CD8-positive, alpha-beta memory T cell (primary cell): ENCODE measurements at regions of chr1 and their contacts with region 1.

Region 1: DNA sequence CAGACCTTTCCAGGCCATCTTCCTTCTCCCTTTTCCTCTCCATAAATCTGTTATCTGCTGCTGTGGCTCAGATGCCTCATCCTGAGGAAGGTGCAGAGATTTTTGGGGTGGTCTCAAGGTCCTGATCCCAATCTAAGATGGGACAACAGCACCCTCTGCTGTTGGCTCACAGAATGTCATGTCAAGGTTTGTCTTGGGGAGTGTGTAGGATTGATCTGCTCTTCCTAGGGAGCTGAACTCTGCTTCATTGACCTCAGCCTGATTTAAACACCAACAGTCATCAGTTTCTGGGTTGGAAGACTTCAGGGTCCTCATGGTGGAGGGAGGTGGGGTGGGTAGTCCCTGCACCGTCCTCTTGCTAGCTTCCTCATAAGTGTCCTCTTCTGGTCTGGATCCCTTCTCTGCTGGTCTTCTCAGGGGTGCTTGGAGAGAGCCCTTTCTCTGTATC is 62.8 kb upstream of the LAX1 start:
- DNase-seq: peak; percentile 34 to 69 (median 53)
- H3K4me3 ChIP-seq: no peak overlapping the region
- H3K4me3 Mint-ChIP-seq: no peak overlapping the region
- H3K27ac ChIP-seq: no peak overlapping the region
- H3K27ac Mint-ChIP-seq: peak overlapping the region; percentile 19 to 97 (median 90)
- H3K4me1 ChIP-seq: no peaks in the 10 kb centered on the region
- H3K4me1 Mint-ChIP-seq: peaks cover 10 to 20% (median 13%) of the 10 kb centered on the region in 3 donors
- H3K27me3 ChIP-seq: no peaks in the 10 kb centered on the region
- H3K27me3 Mint-ChIP-seq: no peaks in the 10 kb centered on the region

Region 2: DNA sequence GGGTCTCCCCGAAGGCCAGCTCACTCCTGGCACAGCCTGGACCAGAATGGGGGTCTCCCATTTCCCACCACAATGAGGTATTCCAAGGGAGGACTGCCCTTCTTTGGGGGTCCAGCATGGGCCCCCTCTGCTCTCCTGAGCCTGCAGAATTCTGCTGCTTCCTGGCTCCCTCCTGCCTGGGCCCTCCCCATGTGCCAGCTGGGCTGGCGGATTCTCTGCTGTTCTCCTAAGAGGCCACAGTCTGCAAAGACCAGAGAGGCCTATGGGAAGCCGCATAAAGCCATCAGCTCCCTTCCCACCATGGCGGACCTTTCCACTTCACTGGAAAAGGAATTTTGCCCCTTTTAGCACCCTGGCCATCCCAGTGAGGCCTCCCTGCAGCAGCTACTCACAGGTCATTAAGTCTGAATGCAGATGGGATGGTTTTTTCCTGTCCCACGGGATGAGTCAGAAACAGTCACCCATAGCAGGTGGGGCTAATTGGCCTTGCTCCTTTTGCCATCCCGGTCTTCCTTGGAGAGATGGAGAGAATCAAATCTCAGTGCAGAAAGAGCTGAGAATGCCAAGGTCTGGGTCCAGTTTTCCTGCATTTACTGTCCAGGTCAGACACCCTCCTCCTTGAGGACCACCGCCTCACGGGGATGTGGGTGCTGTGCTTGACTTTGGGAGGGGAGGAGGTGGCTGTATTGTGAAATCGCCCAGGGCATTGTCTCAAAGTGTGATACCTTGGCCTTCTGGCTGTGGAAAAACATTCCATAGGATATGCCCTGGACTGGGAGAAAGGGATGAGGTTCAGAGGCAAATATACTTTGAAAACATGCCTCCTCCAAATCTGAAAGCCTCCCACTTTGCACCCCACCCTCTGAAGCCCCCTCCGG is 549.8 kb before region 1 on chr1:
- CTCF ChIA-PET with region 1: no interaction called
- POLR2A ChIA-PET with region 1: no interaction called
- DNase-seq: no peak
- H3K4me3 ChIP-seq: no peak overlapping the region
- H3K4me3 Mint-ChIP-seq: no peak overlapping the region
- H3K27ac ChIP-seq: no peak overlapping the region
- H3K27ac Mint-ChIP-seq: peak overlapping the region in 1 of 8 donors; percentile 57
- H3K4me1 ChIP-seq: no peaks in the 10 kb centered on the region
- H3K4me1 Mint-ChIP-seq: no peaks in the 10 kb centered on the region
- H3K27me3 ChIP-seq: no peaks in the 10 kb centered on the region
- H3K27me3 Mint-ChIP-seq: peaks cover 9 to 21% of the 10 kb centered on the region in 2 donors

Region 3: DNA sequence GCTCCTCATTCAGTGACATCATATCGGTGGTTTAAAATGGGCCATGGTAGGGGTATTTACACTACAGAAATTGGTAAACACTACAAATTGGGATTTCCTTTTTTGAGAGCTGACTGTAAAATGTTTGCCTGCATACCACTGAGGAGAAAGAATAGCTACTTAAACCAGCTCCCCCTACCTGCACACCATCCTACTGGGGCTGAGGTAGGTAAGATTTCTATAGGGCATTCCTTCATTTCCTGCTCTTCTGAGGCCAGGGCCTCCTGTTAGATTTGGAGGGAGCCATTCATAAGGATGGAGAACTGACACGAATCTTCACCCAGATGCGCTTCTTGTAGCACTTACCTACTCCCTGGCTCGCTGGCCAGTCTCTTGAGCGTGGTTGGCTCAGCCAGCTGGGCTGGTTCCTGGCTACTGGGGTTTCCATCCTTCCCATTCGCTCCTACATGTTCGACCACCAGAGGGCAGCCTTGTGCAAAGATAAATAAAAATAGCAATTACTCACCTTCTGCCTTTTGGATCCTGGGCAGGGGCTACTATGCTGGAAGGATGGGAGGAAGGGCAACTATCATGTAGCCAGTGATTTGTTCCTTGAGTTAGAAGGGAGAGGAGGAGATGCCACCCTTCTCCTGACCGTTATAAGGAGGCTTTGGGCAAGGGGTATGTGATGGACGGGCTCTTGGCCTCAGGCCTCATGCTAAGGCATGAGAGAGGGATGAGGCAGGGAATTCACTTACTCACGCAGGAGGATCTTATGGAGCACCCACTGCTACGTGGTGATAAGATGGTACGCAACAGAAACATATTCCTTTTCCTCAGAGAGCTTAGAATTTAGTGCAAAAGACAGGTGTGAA is 197.5 kb before region 1 on chr1:
- CTCF ChIA-PET with region 1: interaction called, 66 read pairs
- POLR2A ChIA-PET with region 1: no interaction called
- DNase-seq: peak; percentile 51 to 77 (median 58)
- H3K4me3 ChIP-seq: no peak overlapping the region
- H3K4me3 Mint-ChIP-seq: no peak overlapping the region
- H3K27ac ChIP-seq: no peak overlapping the region
- H3K27ac Mint-ChIP-seq: no peak overlapping the region
- H3K4me1 ChIP-seq: no peaks in the 10 kb centered on the region
- H3K4me1 Mint-ChIP-seq: peaks cover 1 to 6% (median 5%) of the 10 kb centered on the region in 3 donors
- H3K27me3 ChIP-seq: no peaks in the 10 kb centered on the region
- H3K27me3 Mint-ChIP-seq: peaks cover 3 to 4% of the 10 kb centered on the region in 2 donors

Region 4: DNA sequence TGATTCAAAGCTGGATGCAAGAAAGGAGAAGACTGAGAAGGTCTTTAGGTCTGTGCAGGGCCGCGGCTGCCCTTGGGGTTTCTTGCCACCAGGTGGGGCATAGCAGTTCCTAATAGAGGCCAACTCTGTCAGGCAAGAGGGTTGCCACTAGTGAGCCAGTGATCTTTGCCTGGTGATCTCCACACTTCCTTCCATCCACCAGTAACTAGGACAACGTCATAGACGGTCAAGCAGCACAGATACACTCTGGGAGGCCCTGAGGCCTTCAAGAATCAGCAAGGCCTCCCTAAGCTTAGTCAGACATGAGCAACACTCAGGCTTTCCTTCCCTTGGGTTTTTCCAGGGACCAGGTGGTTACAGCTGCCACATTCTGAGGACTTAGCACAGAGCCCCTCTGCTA is 108.4 kb before region 1 on chr1:
- CTCF ChIA-PET with region 1: interaction called, 52 read pairs
- POLR2A ChIA-PET with region 1: no interaction called
- DNase-seq: peak; percentile 29 to 78 (median 47)
- H3K4me3 ChIP-seq: no peak overlapping the region
- H3K4me3 Mint-ChIP-seq: no peak overlapping the region
- H3K27ac ChIP-seq: no peak overlapping the region
- H3K27ac Mint-ChIP-seq: peak overlapping the region in 2 of 8 donors; percentile 30 to 74
- H3K4me1 ChIP-seq: no peaks in the 10 kb centered on the region
- H3K4me1 Mint-ChIP-seq: peaks cover 10 to 17% (median 11%) of the 10 kb centered on the region in 3 donors
- H3K27me3 ChIP-seq: no peaks in the 10 kb centered on the region
- H3K27me3 Mint-ChIP-seq: no peaks in the 10 kb centered on the region

Region 5: GRCh38 chr1:203612932-203613682 is 89.0 kb before region 1 on chr1:
- CTCF ChIA-PET with region 1: interaction called, 10 read pairs
- POLR2A ChIA-PET with region 1: no interaction called
- DNase-seq: no peak
- H3K4me3 ChIP-seq: no peak overlapping the region
- H3K4me3 Mint-ChIP-seq: peak overlapping the region in 5 of 7 donors; percentile 52 to 61 (median 57)
- H3K27ac ChIP-seq: no peak overlapping the region
- H3K27ac Mint-ChIP-seq: peak overlapping the region in 4 of 8 donors; percentile 52 to 68 (median 57)
- H3K4me1 ChIP-seq: peaks cover 26% of the 10 kb centered on the region
- H3K4me1 Mint-ChIP-seq: peaks cover 34 to 50% (median 46%) of the 10 kb centered on the region in 3 donors
- H3K27me3 ChIP-seq: no peaks in the 10 kb centered on the region
- H3K27me3 Mint-ChIP-seq: peaks cover 0 to 1% of the 10 kb centered on the region in 2 donors

Region 6: DNA sequence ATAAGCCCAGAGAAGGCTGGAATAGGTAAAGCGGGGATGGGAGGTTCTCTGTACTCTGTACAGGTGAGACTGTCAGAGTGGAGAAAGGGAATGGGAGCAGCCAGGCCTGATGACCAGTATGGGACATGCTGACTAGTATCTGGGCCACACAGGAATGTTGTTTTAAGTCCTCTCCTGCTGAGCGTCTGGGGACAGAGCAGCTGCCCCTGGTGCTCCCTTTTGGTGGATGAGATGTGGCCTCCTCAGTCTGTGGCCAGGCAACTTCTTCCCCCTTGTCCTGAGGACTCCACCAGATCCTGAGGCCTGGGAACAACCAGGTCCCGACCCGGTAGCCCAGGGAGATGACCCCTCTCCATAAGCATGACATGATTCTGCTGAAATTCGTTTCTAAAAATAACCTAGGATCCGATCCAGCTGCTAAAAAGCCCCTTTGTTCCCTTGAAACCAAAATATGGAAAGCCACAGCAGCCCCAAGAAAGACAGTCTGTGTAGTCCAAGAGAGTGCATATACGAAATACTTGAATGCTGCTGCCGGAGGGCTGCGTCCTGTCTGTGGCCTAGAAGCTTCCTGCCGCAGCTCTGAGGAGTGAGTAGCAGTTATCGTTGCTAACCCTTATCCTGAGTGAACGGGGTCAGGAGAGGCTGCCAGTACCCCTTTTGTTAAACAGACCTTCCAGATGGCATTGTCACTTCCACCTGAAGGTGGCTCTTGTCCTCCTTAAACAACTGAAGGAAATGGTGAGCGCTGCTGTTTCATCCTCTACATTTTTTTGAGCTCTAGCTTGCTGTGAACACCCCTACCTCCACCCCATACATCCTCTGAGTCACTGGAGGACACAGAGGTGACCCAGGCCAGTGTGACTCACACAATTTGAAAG is 28.4 kb before region 1 on chr1:
- CTCF ChIA-PET with region 1: interaction called, 17 read pairs
- POLR2A ChIA-PET with region 1: interaction called, 5 read pairs
- DNase-seq: peak; percentile 59 to 87 (median 74)
- H3K4me3 ChIP-seq: peak overlapping the region; percentile 11
- H3K4me3 Mint-ChIP-seq: peak overlapping the region; percentile 13 to 88 (median 83)
- H3K27ac ChIP-seq: peak overlapping the region; percentile 67
- H3K27ac Mint-ChIP-seq: peak overlapping the region; percentile 85 to 99 (median 97)
- H3K4me1 ChIP-seq: peaks cover 63% of the 10 kb centered on the region
- H3K4me1 Mint-ChIP-seq: peaks cover 68 to 98% (median 81%) of the 10 kb centered on the region in 3 donors
- H3K27me3 ChIP-seq: no peaks in the 10 kb centered on the region
- H3K27me3 Mint-ChIP-seq: no peaks in the 10 kb centered on the region

Region 7: GRCh38 chr1:203682473-203683383 is 19.4 kb before region 1 on chr1:
- CTCF ChIA-PET with region 1: interaction called, 10 read pairs
- POLR2A ChIA-PET with region 1: no interaction called
- DNase-seq: peak; percentile 38 to 86 (median 71)
- H3K4me3 ChIP-seq: peak overlapping the region; percentile 12
- H3K4me3 Mint-ChIP-seq: peak overlapping the region; percentile 32 to 75 (median 60)
- H3K27ac ChIP-seq: peak overlapping the region; percentile 82
- H3K27ac Mint-ChIP-seq: peak overlapping the region; percentile 94 to 100 (median 96)
- H3K4me1 ChIP-seq: peaks cover 39% of the 10 kb centered on the region
- H3K4me1 Mint-ChIP-seq: peaks cover 56 to 75% (median 66%) of the 10 kb centered on the region in 3 donors
- H3K27me3 ChIP-seq: no peaks in the 10 kb centered on the region
- H3K27me3 Mint-ChIP-seq: no peaks in the 10 kb centered on the region